Naive thymus-derived CD4-positive, alpha-beta T cell (primary cell): ENCODE measurements at regions of chr4 and their contacts with region 1.

Region 1: DNA sequence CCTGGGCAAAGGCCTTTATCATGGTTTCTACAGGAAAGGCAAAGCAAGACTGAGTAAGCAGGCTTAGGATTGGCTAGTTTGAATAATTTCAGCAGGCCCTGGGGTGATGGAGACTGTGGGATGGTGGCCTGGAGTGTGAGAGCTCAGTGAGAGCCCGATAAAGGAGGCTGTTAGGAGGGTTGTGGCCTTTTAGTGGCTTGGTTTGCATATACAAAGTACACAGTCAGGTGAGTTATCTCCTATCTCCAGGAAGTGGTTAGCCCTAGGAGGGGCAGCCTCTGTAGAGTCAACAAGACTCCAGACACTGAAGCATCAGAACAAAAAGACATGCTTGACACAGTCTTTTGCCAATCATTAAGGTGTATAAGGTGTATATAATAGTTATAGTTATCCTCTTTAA is 157.2 kb downstream of the CFAP299 start:
- DNase-seq: peak in 7 of 9 donors; percentile 61 to 89 (median 83)
- ATAC-seq: peak; percentile 98
- H3K4me3 ChIP-seq: no peak overlapping the region
- H3K4me3 Mint-ChIP-seq: peak overlapping the region; percentile 53 to 87 (median 67)
- H3K27ac ChIP-seq: peak overlapping the region; percentile 25
- H3K27ac Mint-ChIP-seq: peak overlapping the region; percentile 92 to 99 (median 97)
- H3K4me1 ChIP-seq: peaks cover 36 to 43% of the 10 kb centered on the region in 2 donors
- H3K4me1 Mint-ChIP-seq: peaks cover 28 to 74% (median 69%) of the 10 kb centered on the region in 7 donors
- H3K27me3 ChIP-seq: no peaks in the 10 kb centered on the region
- H3K27me3 Mint-ChIP-seq: no peaks in the 10 kb centered on the region

Region 2: GRCh38 chr4:79353075-79353474 is 1139.7 kb before region 1 on chr4:
- CTCF ChIA-PET with region 1: no interaction called
- POLR2A ChIA-PET with region 1: no interaction called
- intact Hi-C with region 1: no loop called
- DNase-seq: no peak
- ATAC-seq: no peak
- H3K4me3 ChIP-seq: no peak overlapping the region
- H3K4me3 Mint-ChIP-seq: no peak overlapping the region
- H3K27ac ChIP-seq: no peak overlapping the region
- H3K27ac Mint-ChIP-seq: no peak overlapping the region
- H3K4me1 ChIP-seq: no peaks in the 10 kb centered on the region
- H3K4me1 Mint-ChIP-seq: no peaks in the 10 kb centered on the region
- H3K27me3 ChIP-seq: no peaks in the 10 kb centered on the region
- H3K27me3 Mint-ChIP-seq: peaks cover 0 to 7% (median 0%) of the 10 kb centered on the region in 5 donors

Region 3: DNA sequence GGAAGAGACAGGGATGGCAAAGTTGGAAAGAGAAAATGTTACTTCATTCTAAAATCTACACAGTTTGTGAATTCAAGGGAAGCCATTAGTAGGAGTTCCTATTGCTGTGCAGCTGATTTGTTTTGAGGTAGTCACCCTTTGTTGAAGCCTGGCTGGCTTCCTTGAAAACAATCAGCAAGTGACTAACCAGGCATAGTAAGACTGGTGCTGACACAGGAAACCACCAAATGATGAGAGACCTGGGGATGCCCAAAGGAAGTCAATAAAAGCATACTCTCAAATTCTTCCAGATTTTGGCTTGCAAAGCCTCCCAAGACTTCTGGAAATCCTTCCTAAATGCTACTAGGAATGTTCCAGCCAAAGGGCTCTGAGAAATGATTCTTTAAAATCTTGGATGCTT is 319.4 kb before region 1 on chr4:
- CTCF ChIA-PET with region 1: no interaction called
- POLR2A ChIA-PET with region 1: no interaction called
- intact Hi-C with region 1: loop called in 1 of 2 experiments (anchors 10 kb)
- DNase-seq: peak in 8 of 9 donors; percentile 42 to 78 (median 72)
- ATAC-seq: peak; percentile 98
- H3K4me3 ChIP-seq: peak overlapping the region; percentile 26
- H3K4me3 Mint-ChIP-seq: peak overlapping the region; percentile 66 to 84 (median 76)
- H3K27ac ChIP-seq: peak overlapping the region; percentile 75
- H3K27ac Mint-ChIP-seq: peak overlapping the region; percentile 92 to 99 (median 96)
- H3K4me1 ChIP-seq: peaks cover 33 to 40% of the 10 kb centered on the region in 2 donors
- H3K4me1 Mint-ChIP-seq: peaks cover 33 to 72% (median 60%) of the 10 kb centered on the region in 7 donors
- H3K27me3 ChIP-seq: no peaks in the 10 kb centered on the region
- H3K27me3 Mint-ChIP-seq: peaks cover 0 to 2% (median 0%) of the 10 kb centered on the region in 5 donors

Region 4: DNA sequence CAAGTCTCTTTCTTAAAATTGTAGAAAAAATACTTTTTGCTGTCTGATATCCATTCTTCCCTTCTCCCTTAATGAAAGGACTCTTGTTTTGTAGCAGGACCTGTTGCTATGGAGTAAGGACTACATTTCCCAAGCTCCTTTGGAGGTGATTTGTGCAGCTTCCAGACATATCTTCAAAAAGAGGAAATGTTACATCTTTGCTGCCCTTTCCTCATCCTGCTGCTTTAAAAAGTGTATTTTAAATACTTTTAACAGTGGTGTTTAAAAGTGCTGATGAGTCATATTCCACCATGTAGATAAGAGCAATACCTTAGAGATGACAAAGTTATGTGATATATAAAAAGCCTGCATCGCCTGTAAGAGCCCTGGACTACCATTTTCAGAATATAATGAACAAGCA is 58.5 kb before region 1 on chr4:
- CTCF ChIA-PET with region 1: no interaction called
- POLR2A ChIA-PET with region 1: interaction called, 10 read pairs
- intact Hi-C with region 1: no loop called
- DNase-seq: no peak
- ATAC-seq: no peak
- H3K4me3 ChIP-seq: no peak overlapping the region
- H3K4me3 Mint-ChIP-seq: no peak overlapping the region
- H3K27ac ChIP-seq: no peak overlapping the region
- H3K27ac Mint-ChIP-seq: peak overlapping the region in 1 of 9 donors; percentile 34
- H3K4me1 ChIP-seq: peaks cover 3 to 13% of the 10 kb centered on the region in 2 donors
- H3K4me1 Mint-ChIP-seq: peaks cover 3 to 42% (median 31%) of the 10 kb centered on the region in 7 donors
- H3K27me3 ChIP-seq: no peaks in the 10 kb centered on the region
- H3K27me3 Mint-ChIP-seq: peaks cover 0 to 2% (median 0%) of the 10 kb centered on the region in 5 donors

Region 5: DNA sequence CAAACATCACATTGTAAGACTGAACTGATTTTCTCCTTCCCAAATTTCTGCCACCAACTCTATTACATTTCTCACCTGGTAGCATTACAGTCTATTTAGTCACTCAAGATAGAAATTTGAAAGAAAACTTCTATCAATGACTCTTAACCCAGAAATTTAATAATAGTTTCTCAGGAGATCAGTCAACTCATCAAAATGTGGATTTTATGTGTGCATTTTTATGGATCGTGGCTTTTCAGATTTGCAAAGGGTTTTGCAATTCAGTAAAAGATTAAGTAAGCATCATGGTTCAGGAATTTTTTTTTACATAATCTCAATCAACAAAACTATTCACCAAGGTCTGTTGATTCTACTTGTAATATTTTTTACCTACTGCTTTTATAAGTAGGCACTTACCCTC is 46.1 kb before region 1 on chr4:
- CTCF ChIA-PET with region 1: no interaction called
- POLR2A ChIA-PET with region 1: no interaction called
- intact Hi-C with region 1: loop called in 1 of 2 experiments (anchors 5 kb)
- DNase-seq: no peak
- ATAC-seq: no peak
- H3K4me3 ChIP-seq: no peak overlapping the region
- H3K4me3 Mint-ChIP-seq: no peak overlapping the region
- H3K27ac ChIP-seq: no peak overlapping the region
- H3K27ac Mint-ChIP-seq: peak overlapping the region in 1 of 9 donors; percentile 49
- H3K4me1 ChIP-seq: no peaks in the 10 kb centered on the region
- H3K4me1 Mint-ChIP-seq: peaks cover 0 to 6% (median under 1%) of the 10 kb centered on the region in 7 donors
- H3K27me3 ChIP-seq: no peaks in the 10 kb centered on the region
- H3K27me3 Mint-ChIP-seq: no peaks in the 10 kb centered on the region

Region 6: GRCh38 chr4:80540785-80541469 is 48.2 kb after region 1 on chr4:
- CTCF ChIA-PET with region 1: no interaction called
- POLR2A ChIA-PET with region 1: no interaction called
- intact Hi-C with region 1: loop called in 1 of 2 experiments (anchors 2 kb)
- DNase-seq: peak in 5 of 9 donors; percentile 5 to 39 (median 20)
- ATAC-seq: peak; percentile 49
- H3K4me3 ChIP-seq: no peak overlapping the region
- H3K4me3 Mint-ChIP-seq: peak overlapping the region in 6 of 10 donors; percentile 12 to 39 (median 20)
- H3K27ac ChIP-seq: no peak overlapping the region
- H3K27ac Mint-ChIP-seq: no peak overlapping the region
- H3K4me1 ChIP-seq: peaks cover 7 to 11% of the 10 kb centered on the region in 2 donors
- H3K4me1 Mint-ChIP-seq: peaks cover 8 to 38% (median 24%) of the 10 kb centered on the region in 7 donors
- H3K27me3 ChIP-seq: no peaks in the 10 kb centered on the region
- H3K27me3 Mint-ChIP-seq: peaks cover 5 to 41% (median 8%) of the 10 kb centered on the region in 5 donors

Region 7: DNA sequence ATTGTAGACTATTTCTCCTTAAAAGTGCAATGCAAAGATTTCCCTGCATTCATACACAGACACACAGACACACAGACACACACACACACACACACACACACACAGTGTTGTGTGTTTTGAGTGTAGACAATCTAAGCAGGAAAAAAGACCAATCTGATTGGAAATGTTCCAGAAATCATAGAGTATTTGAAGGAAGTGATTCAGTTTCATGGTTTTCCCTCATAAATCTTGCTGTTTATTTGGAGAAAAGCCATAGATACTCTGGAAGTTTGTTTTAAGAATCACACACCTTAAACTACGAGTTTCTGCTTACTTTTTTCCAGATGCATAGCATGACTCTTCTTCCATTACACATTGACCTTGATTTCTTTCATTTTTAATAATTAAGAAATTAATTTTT is 239.2 kb after region 1 on chr4:
- CTCF ChIA-PET with region 1: no interaction called
- POLR2A ChIA-PET with region 1: no interaction called
- intact Hi-C with region 1: no loop called
- DNase-seq: no peak
- ATAC-seq: no peak
- H3K4me3 ChIP-seq: no peak overlapping the region
- H3K4me3 Mint-ChIP-seq: no peak overlapping the region
- H3K27ac ChIP-seq: no peak overlapping the region
- H3K27ac Mint-ChIP-seq: no peak overlapping the region
- H3K4me1 ChIP-seq: no peaks in the 10 kb centered on the region
- H3K4me1 Mint-ChIP-seq: no peaks in the 10 kb centered on the region
- H3K27me3 ChIP-seq: no peaks in the 10 kb centered on the region
- H3K27me3 Mint-ChIP-seq: no peaks in the 10 kb centered on the region